ENCODE measurements at regions of chr9 and their contacts with region 1.

Region 1: GRCh38 chr9:37903647-37904444 is at the start of gene SLC25A51:
- DNase-seq: peak; percentile 98
- ATAC-seq: peak; percentile 88
- H3K4me3 ChIP-seq: peak within 1 kb of the TSS; percentile 60 to 83 (median 79)
- H3K4me3 Mint-ChIP-seq: peak within 1 kb of the TSS; percentile 94
- H3K27ac ChIP-seq: peak within 1 kb of the TSS; percentile 71 to 78
- H3K27ac Mint-ChIP-seq: peak within 1 kb of the TSS; percentile 96
- H3K4me1 ChIP-seq: peaks cover 14 to 20% of the 10 kb centered on the region in 2 donors
- H3K4me1 Mint-ChIP-seq: peaks cover 20% of the 10 kb centered on the region
- H3K27me3 ChIP-seq: no peaks in the 10 kb centered on the region
- H3K27me3 Mint-ChIP-seq: no peaks in the 10 kb centered on the region
- CTCF ChIP-seq: peak; percentile 82
- total RNA-seq, gene SLC25A51: 27.8 and 28.1 TPM in 2 replicates

Region 2: DNA sequence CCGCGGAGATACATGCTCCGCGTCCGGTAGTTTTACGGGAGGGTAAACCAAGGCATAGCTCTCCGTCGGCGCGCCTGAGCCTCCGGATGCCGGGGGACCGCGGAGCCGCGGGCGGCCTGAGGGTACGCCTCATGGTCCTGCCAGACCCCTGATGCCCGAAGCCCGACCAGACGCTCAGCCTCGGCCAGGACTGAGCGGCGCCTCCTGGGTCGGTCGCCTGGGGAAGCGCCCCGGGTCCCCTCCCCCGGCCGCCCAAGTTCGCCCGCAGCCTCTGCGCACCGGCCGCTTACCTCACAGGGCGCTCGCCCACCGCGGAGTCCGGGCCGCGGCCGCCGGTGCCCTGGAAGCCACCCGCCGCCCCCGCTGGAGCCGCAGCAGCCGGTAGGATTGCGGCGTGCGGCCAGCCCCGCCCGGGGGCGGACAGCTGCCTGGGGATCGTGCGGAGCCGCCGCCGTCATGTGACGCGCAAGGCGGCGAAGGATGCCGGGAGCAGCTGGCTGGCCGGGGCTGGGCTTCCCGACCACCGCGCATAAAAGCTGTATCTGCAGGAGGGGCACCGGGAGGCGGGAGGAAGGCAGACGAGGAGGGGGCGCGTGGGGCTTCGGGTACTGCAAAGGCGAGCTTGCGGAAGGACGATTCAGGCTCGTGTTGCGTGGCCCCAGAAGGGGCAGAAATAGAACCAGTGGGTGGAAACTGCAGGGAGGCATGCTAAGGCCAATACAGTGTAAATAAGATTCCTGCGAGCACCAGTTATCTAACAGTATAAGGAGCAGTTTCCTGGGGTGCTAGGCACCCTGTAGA is 327.7 kb before region 1 on chr9 and contains the start of gene FBXO10:
- CTCF ChIA-PET with region 1: no interaction called
- POLR2A ChIA-PET with region 1: no interaction called
- intact Hi-C with region 1: loop called (anchors 5 kb)
- DNase-seq: peak; percentile 75
- ATAC-seq: peak; percentile 73
- H3K4me3 ChIP-seq: peak within 1 kb of the TSS; percentile 64 to 95 (median 92)
- H3K4me3 Mint-ChIP-seq: peak within 1 kb of the TSS; percentile 98
- H3K27ac ChIP-seq: peak within 1 kb of the TSS; percentile 81 to 86
- H3K27ac Mint-ChIP-seq: peak within 1 kb of the TSS; percentile 96
- H3K4me1 ChIP-seq: peaks cover 17 to 27% of the 10 kb centered on the region in 2 donors
- H3K4me1 Mint-ChIP-seq: peaks cover 56% of the 10 kb centered on the region
- H3K27me3 ChIP-seq: no peaks in the 10 kb centered on the region
- H3K27me3 Mint-ChIP-seq: no peaks in the 10 kb centered on the region
- CTCF ChIP-seq: no peak
- total RNA-seq, gene FBXO10: 67.3 and 68.0 TPM in 2 replicates

Region 3: GRCh38 chr9:37753489-37754190 is 150.2 kb before region 1 on chr9 and contains the start of gene TRMT10B:
- CTCF ChIA-PET with region 1: no interaction called
- POLR2A ChIA-PET with region 1: no interaction called
- intact Hi-C with region 1: loop called (anchors 5 kb)
- DNase-seq: peak; percentile 83
- ATAC-seq: peak; percentile 90
- H3K4me3 ChIP-seq: peak within 1 kb of the TSS; percentile 48 to 96 (median 84)
- H3K4me3 Mint-ChIP-seq: peak within 1 kb of the TSS; percentile 98
- H3K27ac ChIP-seq: peak within 1 kb of the TSS; percentile 80 to 81
- H3K27ac Mint-ChIP-seq: peak within 1 kb of the TSS; percentile 93
- H3K4me1 ChIP-seq: peaks cover 14 to 16% of the 10 kb centered on the region in 2 donors
- H3K4me1 Mint-ChIP-seq: peaks cover 23% of the 10 kb centered on the region
- H3K27me3 ChIP-seq: no peaks in the 10 kb centered on the region
- H3K27me3 Mint-ChIP-seq: no peaks in the 10 kb centered on the region
- CTCF ChIP-seq: no peak
- total RNA-seq, gene TRMT10B: 27.8 and 28.4 TPM in 2 replicates

Region 4: GRCh38 chr9:37800631-37801286 is 103.1 kb before region 1 on chr9 and contains the start of gene DCAF10:
- CTCF ChIA-PET with region 1: no interaction called
- POLR2A ChIA-PET with region 1: no interaction called
- intact Hi-C with region 1: loop called (anchors 5 kb)
- DNase-seq: peak; percentile 94
- ATAC-seq: peak; percentile 85
- H3K4me3 ChIP-seq: peak within 1 kb of the TSS; percentile 82 to 89 (median 85)
- H3K4me3 Mint-ChIP-seq: peak within 1 kb of the TSS; percentile 95
- H3K27ac ChIP-seq: peak within 1 kb of the TSS; percentile 67 to 89
- H3K27ac Mint-ChIP-seq: peak within 1 kb of the TSS; percentile 94
- H3K4me1 ChIP-seq: peaks cover 19 to 30% of the 10 kb centered on the region in 2 donors
- H3K4me1 Mint-ChIP-seq: peaks cover 37% of the 10 kb centered on the region
- H3K27me3 ChIP-seq: no peaks in the 10 kb centered on the region
- H3K27me3 Mint-ChIP-seq: no peaks in the 10 kb centered on the region
- CTCF ChIP-seq: no peak
- total RNA-seq, gene DCAF10: 22.1 and 22.5 TPM in 2 replicates

Region 5: DNA sequence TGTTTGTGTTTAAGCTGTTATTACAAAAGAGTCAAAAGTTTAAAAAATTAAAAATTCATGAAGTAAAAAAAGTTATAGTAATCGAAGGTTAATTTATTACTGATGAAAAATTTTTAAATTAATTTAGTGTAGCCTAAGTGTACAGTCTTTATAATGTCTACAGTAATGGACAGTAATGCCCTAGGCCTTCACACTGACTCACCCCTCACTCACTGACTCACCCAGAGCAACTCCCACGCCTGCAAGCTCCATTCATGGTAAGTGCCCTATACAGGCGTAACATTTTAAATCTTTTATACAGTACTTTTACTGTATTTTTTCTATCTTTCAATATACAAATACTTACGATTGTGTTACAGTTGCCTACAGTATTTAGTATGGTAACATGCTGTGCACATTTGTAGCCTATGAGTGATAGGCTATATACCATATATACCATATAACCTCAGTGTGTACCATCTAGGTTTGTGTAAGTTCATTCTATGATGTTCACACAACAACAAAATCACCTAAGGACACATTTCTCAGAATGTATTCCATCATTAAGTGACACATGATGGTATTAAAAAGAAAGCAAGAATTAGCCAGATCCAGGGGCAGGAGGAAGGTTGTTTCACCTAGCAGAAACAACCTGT is 63.2 kb before region 1 on chr9:
- CTCF ChIA-PET with region 1: no interaction called
- POLR2A ChIA-PET with region 1: no interaction called
- intact Hi-C with region 1: no loop called
- DNase-seq: no peak
- ATAC-seq: no peak
- H3K4me3 ChIP-seq: no peak overlapping the region
- H3K4me3 Mint-ChIP-seq: no peak overlapping the region
- H3K27ac ChIP-seq: no peak overlapping the region
- H3K27ac Mint-ChIP-seq: no peak overlapping the region
- H3K4me1 ChIP-seq: no peaks in the 10 kb centered on the region
- H3K4me1 Mint-ChIP-seq: no peaks in the 10 kb centered on the region
- H3K27me3 ChIP-seq: no peaks in the 10 kb centered on the region
- H3K27me3 Mint-ChIP-seq: no peaks in the 10 kb centered on the region
- CTCF ChIP-seq: no peak

Region 6: GRCh38 chr9:37876376-37876775 is 27.5 kb before region 1 on chr9:
- CTCF ChIA-PET with region 1: no interaction called
- POLR2A ChIA-PET with region 1: no interaction called
- intact Hi-C with region 1: no loop called
- DNase-seq: no peak
- ATAC-seq: no peak
- H3K4me3 ChIP-seq: no peak overlapping the region
- H3K4me3 Mint-ChIP-seq: no peak overlapping the region
- H3K27ac ChIP-seq: no peak overlapping the region
- H3K27ac Mint-ChIP-seq: no peak overlapping the region
- H3K4me1 ChIP-seq: no peaks in the 10 kb centered on the region
- H3K4me1 Mint-ChIP-seq: no peaks in the 10 kb centered on the region
- H3K27me3 ChIP-seq: no peaks in the 10 kb centered on the region
- H3K27me3 Mint-ChIP-seq: no peaks in the 10 kb centered on the region
- CTCF ChIP-seq: no peak

Region 7: DNA sequence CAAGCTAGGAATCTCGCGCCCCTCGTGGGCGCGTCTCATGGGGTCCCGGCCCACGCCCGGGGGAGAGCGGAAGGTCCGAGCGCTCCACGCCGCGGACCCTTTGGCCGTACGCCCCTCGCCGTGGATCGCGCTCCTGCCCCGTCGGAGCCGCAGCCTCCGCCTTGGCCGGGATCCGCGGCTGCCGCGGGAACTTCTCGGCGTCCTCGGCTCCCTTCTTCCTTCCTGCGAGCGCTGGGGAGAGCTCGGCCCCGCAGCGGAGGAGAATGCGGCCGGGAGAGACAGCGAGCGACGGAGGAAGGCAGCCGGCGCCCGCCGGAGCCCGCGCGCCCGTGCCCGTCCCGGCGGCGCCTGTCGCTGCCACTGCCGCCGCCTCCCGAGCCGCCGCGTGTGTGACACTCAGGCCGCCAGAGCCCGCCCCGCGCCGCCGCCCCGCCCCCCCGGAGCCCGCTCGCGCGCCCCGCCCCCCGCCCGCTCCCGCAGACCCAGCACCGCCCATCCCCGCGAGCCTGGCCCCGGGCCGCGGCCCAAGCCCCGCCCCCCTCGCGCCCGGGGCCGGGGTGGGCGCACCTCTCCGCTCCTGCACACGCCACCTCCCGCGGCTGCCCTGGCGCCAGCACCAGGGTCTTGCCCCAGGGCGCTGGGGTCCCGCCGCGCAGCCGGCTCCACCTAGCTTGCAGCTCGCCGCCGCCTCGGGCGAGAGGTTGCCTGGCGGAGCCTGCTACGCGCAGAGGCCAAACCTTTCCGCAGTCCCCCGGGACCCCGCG is 165.2 kb after region 1 on chr9 and contains the start of gene SHB:
- CTCF ChIA-PET with region 1: no interaction called
- POLR2A ChIA-PET with region 1: no interaction called
- intact Hi-C with region 1: loop called (anchors 2 kb)
- DNase-seq: peak; percentile 89
- ATAC-seq: peak; percentile 84
- H3K4me3 ChIP-seq: peak within 1 kb of the TSS; percentile 55 to 85 (median 78)
- H3K4me3 Mint-ChIP-seq: peak within 1 kb of the TSS; percentile 93
- H3K27ac ChIP-seq: no peak within 1 kb of the TSS
- H3K27ac Mint-ChIP-seq: no peak within 1 kb of the TSS
- H3K4me1 ChIP-seq: peaks cover 19 to 22% of the 10 kb centered on the region in 2 donors
- H3K4me1 Mint-ChIP-seq: peaks cover 19% of the 10 kb centered on the region
- H3K27me3 ChIP-seq: peaks cover 0 to 34% (median 14%) of the 10 kb centered on the region in 4 experiments
- H3K27me3 Mint-ChIP-seq: peaks cover 34% of the 10 kb centered on the region
- CTCF ChIP-seq: no peak
- total RNA-seq, gene SHB: 1.5 and 1.9 TPM in 2 replicates

Measured in B cell (primary cell).